Common myeloid progenitor, CD34-positive (primary cell): ENCODE measurements at regions of chr2 and their contacts with region 1.

Region 1: GRCh38 chr2:127695491-127696472 is 5.5 kb upstream of the SFT2D3 start:
- DNase-seq: peak; percentile 81 to 89 (median 83)
- H3K4me3 ChIP-seq: peak overlapping the region in 3 of 7 experiments; percentile 4 to 38 (median 8)
- H3K27ac ChIP-seq: no peak overlapping the region
- H3K4me1 ChIP-seq: peaks cover 2 to 10% (median 7%) of the 10 kb centered on the region in 4 experiments
- H3K27me3 ChIP-seq: no peaks in the 10 kb centered on the region

Region 2: DNA sequence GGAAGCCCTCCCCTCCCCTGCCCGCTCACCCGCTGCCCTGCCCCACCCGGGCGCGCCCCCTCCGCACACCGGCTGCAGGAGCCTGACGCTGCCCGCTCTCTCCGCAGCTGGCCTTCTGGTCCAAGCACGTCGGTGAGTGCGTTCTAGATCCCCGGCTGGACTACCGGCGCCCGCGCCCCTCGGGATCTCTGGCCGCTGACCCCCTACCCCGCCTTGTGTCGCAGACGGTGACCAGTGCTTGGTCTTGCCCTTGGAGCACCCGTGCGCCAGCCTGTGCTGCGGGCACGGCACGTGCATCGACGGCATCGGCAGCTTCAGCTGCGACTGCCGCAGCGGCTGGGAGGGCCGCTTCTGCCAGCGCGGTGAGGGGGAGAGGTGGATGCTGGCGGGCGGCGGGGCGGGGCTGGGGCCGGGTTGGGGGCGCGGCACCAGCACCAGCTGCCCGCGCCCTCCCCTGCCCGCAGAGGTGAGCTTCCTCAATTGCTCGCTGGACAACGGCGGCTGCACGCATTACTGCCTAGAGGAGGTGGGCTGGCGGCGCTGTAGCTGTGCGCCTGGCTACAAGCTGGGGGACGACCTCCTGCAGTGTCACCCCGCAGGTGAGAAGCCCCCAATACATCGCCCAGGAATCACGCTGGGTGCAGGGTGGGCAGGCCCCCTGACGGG is 272.8 kb before region 1 on chr2:
- CTCF ChIA-PET with region 1: no interaction called
- POLR2A ChIA-PET with region 1: no interaction called
- DNase-seq: peak; percentile 63 to 92 (median 82)
- H3K4me3 ChIP-seq: peak overlapping the region; percentile 13 to 77 (median 59)
- H3K27ac ChIP-seq: no peak overlapping the region
- H3K4me1 ChIP-seq: peaks cover 0 to 23% (median 17%) of the 10 kb centered on the region in 4 experiments
- H3K27me3 ChIP-seq: peaks cover 0 to 24% (median 0%) of the 10 kb centered on the region in 5 experiments

Region 3: DNA sequence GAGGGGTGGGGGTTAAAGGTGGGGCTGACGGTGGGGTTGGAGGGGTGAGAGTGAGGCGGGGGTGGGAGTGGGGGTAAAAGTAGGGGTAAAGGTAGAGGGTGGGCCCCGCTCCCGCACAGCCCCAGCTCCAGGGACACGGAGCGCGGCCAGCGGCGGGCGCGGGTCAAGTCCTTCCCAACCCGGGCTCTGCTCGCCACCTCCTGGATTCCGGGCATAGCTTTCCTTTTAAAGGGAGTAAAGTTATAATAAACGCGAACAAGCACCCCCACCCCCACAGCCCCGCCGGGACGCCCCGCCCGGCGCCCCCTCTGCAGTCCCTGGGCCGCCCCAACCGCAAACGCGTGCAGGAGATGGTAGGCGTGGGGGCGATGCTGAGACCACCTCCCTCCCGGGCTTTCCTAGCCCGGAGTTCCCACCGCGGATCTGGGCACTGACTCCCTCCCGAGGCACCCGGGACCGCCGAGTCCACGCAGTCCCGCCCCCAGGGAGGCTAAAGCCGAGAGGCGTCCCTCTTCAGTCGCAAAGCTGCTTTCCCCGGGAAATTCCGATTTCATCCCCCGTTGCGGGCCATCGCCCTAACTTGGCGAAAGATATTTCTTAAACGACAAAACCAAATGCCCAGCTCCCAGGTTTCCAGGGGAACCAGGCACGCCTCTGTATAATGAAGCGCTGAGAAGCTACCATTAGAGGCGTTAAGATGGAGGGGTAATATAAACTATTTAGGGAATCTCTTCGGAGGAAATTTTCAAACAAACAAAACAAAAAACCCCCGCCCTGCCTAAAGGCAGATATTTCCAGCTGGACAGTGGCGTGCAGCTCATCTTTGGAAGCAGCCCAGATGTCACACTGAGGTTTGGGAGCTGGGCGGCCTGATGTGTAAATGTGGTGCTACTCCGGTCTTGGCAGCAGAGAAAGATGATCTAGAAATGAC is 20.2 kb before region 1 on chr2 and contains the start of gene LIMS2:
- CTCF ChIA-PET with region 1: interaction called, 19 read pairs
- POLR2A ChIA-PET with region 1: no interaction called
- DNase-seq: peak in 1 of 3 donors; percentile 31
- H3K4me3 ChIP-seq: peak within 1 kb of the TSS in 5 of 7 experiments; percentile 25 to 68 (median 66)
- H3K27ac ChIP-seq: no peak within 1 kb of the TSS
- H3K4me1 ChIP-seq: peaks cover 0 to 13% (median 7%) of the 10 kb centered on the region in 4 experiments
- H3K27me3 ChIP-seq: peaks cover 3 to 70% (median 31%) of the 10 kb centered on the region in 5 experiments